ENCODE measurements at regions of chr19 and their contacts with region 1.

Region 1: GRCh38 chr19:35557539-35558399 is 5.7 kb downstream of the ATP4A start:
- DNase-seq: peak; percentile 83 to 89
- ATAC-seq: peak; percentile 42 to 81
- H3K4me3 ChIP-seq: peak overlapping the region; percentile 51
- H3K27ac ChIP-seq: peak overlapping the region in 1 of 2 experiments; percentile 62; a peak in 3 of 6 replicates
- H3K4me1 ChIP-seq: 0 out of 3 replicates have a peak, but pooled peaks cover 6% of the 10 kb centered on the region
- CTCF ChIP-seq: no peak
- EP300 ChIP-seq: no peak
- POLR2A ChIP-seq: no peak
- RAD21 ChIP-seq: no peak

Region 2: GRCh38 chr19:35404879-35405622 is 152.7 kb before region 1 on chr19:
- CTCF ChIA-PET with region 1: no interaction called
- POLR2A ChIA-PET with region 1: no interaction called
- DNase-seq: peak; percentile 66
- ATAC-seq: peak; percentile 62 to 80
- H3K4me3 ChIP-seq: no peak overlapping the region
- H3K27ac ChIP-seq: no peak overlapping the region
- H3K4me1 ChIP-seq: no peaks in the 10 kb centered on the region
- CTCF ChIP-seq: no peak
- EP300 ChIP-seq: no peak
- POLR2A ChIP-seq: no peak
- RAD21 ChIP-seq: no peak

Region 3: DNA sequence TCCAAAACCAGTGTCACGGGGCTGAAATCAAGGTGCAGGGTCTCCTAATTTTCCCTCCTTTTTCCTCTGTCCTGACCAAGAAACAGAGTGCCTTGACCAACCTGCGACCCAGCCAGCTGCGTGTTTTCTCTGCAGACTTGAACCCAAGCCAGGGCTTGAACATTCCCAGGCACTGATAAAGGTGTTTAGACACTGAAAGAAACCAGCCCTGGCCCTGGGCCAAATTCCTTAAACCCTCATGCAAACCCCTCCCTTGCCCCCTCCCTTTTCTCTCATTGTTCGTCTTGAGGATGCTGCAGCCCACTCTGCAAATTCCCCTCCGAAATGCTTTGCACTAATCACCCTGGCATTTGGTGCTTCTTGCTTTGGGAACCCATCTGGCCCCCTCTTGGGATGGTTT is 119.2 kb before region 1 on chr19:
- CTCF ChIA-PET with region 1: no interaction called
- POLR2A ChIA-PET with region 1: no interaction called
- DNase-seq: no peak
- ATAC-seq: no peak
- H3K4me3 ChIP-seq: no peak overlapping the region
- H3K27ac ChIP-seq: no peak overlapping the region
- H3K4me1 ChIP-seq: peaks cover 16% of the 10 kb centered on the region
- CTCF ChIP-seq: no peak
- EP300 ChIP-seq: no peak
- POLR2A ChIP-seq: no peak
- RAD21 ChIP-seq: no peak

Region 4: GRCh38 chr19:35449053-35449687 is 108.6 kb before region 1 on chr19:
- CTCF ChIA-PET with region 1: no interaction called
- POLR2A ChIA-PET with region 1: no interaction called
- DNase-seq: no peak
- ATAC-seq: peak; percentile 10 to 41; a peak in 3 of 6 replicates
- H3K4me3 ChIP-seq: no peak overlapping the region
- H3K27ac ChIP-seq: no peak overlapping the region
- H3K4me1 ChIP-seq: no peaks in the 10 kb centered on the region
- CTCF ChIP-seq: no peak
- EP300 ChIP-seq: no peak
- POLR2A ChIP-seq: no peak
- RAD21 ChIP-seq: no peak

Region 5: DNA sequence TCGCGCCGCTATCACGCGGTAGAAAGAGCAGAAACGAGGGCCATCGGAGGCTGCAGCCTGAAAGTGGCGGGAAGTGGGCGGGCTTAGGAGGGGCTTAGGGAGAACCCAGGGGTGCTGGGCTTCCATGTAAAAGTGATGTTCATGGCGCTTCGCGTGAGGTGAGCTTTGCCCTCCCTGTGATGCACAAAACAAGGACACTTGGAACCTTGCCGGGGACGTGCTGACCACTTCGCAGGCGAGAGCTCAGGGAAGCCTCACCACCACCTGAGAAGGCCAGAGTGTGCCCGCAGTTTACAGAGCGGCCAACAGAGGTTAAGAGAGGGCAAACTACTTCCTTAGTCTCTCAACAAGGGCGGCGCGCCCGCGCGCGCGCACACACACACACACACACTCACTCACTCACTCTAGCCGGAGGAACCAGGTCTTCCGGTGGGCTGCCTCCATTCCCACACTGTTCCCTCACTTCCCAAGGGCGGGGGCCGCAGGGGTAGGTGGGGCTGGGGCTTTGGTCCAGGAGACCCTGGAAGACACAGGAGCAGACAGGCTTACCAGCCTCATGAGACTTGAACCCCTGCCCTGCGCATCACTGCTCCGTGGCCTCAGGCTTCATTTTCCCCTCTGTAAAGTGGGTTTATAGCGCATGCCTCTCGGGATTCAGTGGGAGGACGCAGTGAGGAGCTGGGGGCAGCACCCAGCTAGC is 23.8 kb before region 1 on chr19:
- CTCF ChIA-PET with region 1: interaction called, 12 read pairs
- POLR2A ChIA-PET with region 1: interaction called, 3 read pairs
- DNase-seq: peak in 1 of 2 experiments; percentile 73
- ATAC-seq: peak; percentile 66 to 76
- H3K4me3 ChIP-seq: no peak overlapping the region
- H3K27ac ChIP-seq: 0 out of 6 replicates have a peak overlapping the region, but pooled peaks of 1 of the 2 experiments have one; percentile 4
- H3K4me1 ChIP-seq: peaks cover 11% of the 10 kb centered on the region
- CTCF ChIP-seq: no peak
- EP300 ChIP-seq: no peak
- POLR2A ChIP-seq: no peak
- RAD21 ChIP-seq: no peak

Region 6: GRCh38 chr19:35592226-35592625 is 34.5 kb after region 1 on chr19:
- CTCF ChIA-PET with region 1: interaction called, 10 read pairs
- POLR2A ChIA-PET with region 1: no interaction called
- DNase-seq: peak; percentile 62 to 82
- ATAC-seq: no peak; a peak in 1 of 6 replicates
- H3K4me3 ChIP-seq: no peak overlapping the region
- H3K27ac ChIP-seq: no peak overlapping the region
- H3K4me1 ChIP-seq: no peaks in the 10 kb centered on the region
- CTCF ChIP-seq: peak; percentile 50
- EP300 ChIP-seq: no peak
- POLR2A ChIP-seq: no peak
- RAD21 ChIP-seq: peak; percentile 51 to 61

Region 7: DNA sequence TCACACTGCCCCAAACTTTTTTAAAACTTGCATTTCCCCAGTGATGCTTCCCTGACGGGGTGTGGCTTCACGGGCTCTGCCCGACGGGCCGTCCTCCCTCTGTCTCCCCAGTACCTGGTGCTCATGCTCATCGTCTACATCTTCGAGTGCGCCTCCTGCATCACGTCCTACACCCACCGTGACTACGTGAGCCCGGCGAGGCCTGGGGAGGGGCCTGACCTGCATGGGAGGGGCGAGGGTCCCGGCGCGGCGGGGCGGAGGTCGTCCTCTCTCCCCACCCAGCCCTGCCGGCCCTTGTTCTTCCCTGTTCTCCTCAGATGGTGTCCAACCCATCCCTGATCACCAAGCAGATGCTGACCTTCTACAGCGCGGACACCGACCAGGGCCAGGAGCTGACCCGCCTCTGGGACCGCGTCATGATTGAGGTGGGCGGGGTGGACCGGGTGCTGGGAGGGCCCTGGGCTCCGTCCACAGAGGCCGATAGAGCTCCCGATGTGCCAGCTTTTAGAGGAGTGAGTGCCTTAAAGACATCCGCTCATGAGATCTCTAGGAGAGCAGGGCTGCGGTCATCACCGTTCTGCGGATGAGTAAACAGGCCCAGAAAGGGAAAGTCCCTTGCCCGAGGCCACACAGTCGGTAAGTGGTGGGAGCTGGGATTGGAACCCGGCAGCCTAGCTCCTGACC is 115.5 kb after region 1 on chr19:
- CTCF ChIA-PET with region 1: interaction called, 17 read pairs
- POLR2A ChIA-PET with region 1: no interaction called
- DNase-seq: peak; percentile 85 to 99
- ATAC-seq: peak; percentile 94 to 97
- H3K4me3 ChIP-seq: peak overlapping the region; percentile 47
- H3K27ac ChIP-seq: peak overlapping the region; percentile 42 to 77
- H3K4me1 ChIP-seq: no peaks in the 10 kb centered on the region
- CTCF ChIP-seq: no peak
- EP300 ChIP-seq: no peak
- POLR2A ChIP-seq: no peak
- RAD21 ChIP-seq: no peak

Region 8: GRCh38 chr19:35702223-35703012 is 144.6 kb after region 1 on chr19:
- CTCF ChIA-PET with region 1: interaction called, 14 read pairs
- POLR2A ChIA-PET with region 1: no interaction called
- DNase-seq: peak; percentile 100
- ATAC-seq: peak; percentile 98 to 99
- H3K4me3 ChIP-seq: peak overlapping the region; percentile 53
- H3K27ac ChIP-seq: peak overlapping the region; percentile 52 to 80
- H3K4me1 ChIP-seq: no peaks in the 10 kb centered on the region
- CTCF ChIP-seq: no peak
- EP300 ChIP-seq: no peak
- POLR2A ChIP-seq: peak; percentile 41
- RAD21 ChIP-seq: no peak

Measured in A549 (cell line).